ENCODE measurements at regions of chr20 and their contacts with region 1.

Region 1: GRCh38 chr20:25739615-25740320 is 43.1 kb upstream of the ZNF337 start:
- ATAC-seq: no peak
- H3K4me3 ChIP-seq: no peak overlapping the region
- H3K27ac ChIP-seq: no peak overlapping the region
- H3K4me1 ChIP-seq: no peaks in the 10 kb centered on the region

Region 2: GRCh38 chr20:25553819-25554296 is 185.9 kb before region 1 on chr20:
- in situ Hi-C with region 1: no loop called
- ATAC-seq: peak in 6 of 8 experiments; percentile 50 to 98 (median 86)
- H3K4me3 ChIP-seq: no peak overlapping the region
- H3K27ac ChIP-seq: no peak overlapping the region
- H3K4me1 ChIP-seq: peaks cover 25 to 38% of the 10 kb centered on the region in 2 donors

Region 3: GRCh38 chr20:25574425-25574824 is 165.3 kb before region 1 on chr20:
- in situ Hi-C with region 1: no loop called
- ATAC-seq: peak in 3 of 8 experiments; percentile 80 to 96 (median 82)
- H3K4me3 ChIP-seq: no peak overlapping the region
- H3K27ac ChIP-seq: no peak overlapping the region
- H3K4me1 ChIP-seq: peaks cover 8 to 9% of the 10 kb centered on the region in 2 donors

Region 4: DNA sequence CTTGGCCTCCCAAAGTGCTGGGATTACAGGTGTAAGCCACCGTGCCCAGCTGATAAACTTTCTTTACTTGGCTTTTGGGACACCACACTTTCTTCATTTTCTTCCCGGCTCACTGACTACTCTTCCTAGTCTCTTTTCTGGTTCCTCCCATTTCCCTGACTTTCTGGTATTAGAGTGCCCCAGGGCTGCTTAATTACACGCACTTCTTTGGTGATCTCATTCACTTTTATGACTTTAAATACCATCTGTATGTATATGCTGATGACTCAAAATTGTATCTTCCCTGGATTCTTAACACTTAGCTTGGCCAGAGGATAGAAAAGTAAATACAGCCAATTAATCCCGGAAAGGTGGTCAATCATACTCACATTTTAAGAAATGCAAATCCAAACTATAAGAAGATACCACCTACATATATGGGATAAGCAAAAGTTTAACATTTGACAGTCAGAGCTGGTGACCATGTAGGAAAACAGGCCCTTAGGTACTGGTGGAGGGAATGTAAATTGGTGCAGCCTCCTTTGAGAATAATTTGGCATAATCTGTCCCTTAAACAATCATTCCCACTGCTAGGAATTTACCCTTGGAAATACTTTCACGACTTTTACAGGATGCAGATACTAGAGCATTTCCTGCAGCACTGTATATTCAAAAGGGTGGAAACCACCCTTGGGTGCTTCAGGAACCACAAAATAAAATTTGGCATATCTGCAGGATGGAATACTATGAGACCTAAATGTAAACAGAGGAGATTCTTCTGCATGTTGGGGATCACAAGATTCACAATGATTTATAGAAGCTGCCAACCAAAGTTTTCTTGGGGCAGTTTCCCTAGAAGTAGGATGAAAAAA is 106.6 kb before region 1 on chr20:
- in situ Hi-C with region 1: loop called in 1 of 9 experiments (anchors 25 kb)
- ATAC-seq: peak in 3 of 8 experiments; percentile 96 to 98 (median 97)
- H3K4me3 ChIP-seq: no peak overlapping the region
- H3K27ac ChIP-seq: no peak overlapping the region
- H3K4me1 ChIP-seq: no peaks in the 10 kb centered on the region

Measured in motor neuron (in vitro differentiated cells).